CD14-positive monocyte (primary cell): ENCODE measurements at regions of chr17 and their contacts with region 1.

Region 1: DNA sequence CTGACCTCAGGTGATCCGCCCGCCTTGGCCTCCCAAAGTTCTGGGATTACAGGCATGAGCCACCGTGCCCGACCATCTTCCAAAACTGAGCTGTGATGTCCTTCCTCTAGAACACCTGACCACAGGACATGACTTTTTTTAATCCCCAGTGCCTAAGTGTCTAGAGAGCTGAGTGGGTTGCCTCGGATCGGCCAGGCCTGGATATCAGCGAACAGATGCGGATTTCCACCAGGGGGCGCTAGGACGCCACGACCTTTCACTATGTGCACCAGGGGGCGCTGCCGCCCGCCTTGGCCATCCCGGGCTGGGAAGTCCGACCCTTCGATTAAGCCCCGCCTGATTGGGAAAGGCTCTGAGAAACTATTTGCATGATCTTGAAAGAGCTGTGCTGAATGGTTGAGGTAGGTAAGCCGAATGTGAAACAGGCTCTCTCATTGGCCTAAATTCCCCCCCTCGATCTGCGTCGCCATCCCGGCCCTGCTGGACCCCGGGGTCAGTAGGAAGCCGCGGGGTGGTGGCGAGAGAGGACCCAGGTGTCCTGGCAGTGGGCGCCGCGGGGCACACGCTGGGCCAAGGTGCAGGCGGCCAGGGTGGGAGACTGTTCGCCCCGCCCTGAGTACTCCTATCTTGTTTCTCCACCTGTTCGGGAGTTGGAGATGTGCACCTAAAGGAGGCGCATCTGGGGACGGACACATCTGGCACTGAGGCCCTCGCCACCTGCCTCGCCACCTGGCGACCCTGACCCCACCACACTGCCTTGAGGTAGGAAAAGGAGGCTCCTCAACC is at the start of gene ACBD4:
- DNase-seq: peak; percentile 97 to 99 (median 98)
- H3K4me3 ChIP-seq: peak within 1 kb of the TSS; percentile 63 to 84 (median 82)
- H3K4me3 Mint-ChIP-seq: peak within 1 kb of the TSS; percentile 80 to 90
- H3K27ac ChIP-seq: peak within 1 kb of the TSS; percentile 11 to 75
- H3K27ac Mint-ChIP-seq: peak within 1 kb of the TSS; percentile 74 to 90 (median 79)
- H3K4me1 ChIP-seq: peaks cover 20 to 31% of the 10 kb centered on the region in 2 donors
- H3K4me1 Mint-ChIP-seq: peaks cover 26% of the 10 kb centered on the region
- H3K27me3 ChIP-seq: peaks cover 0 to 8% of the 10 kb centered on the region in 2 donors
- H3K27me3 Mint-ChIP-seq: peaks cover 7 to 14% (median 8%) of the 10 kb centered on the region in 3 donors
- CTCF ChIP-seq: peak; percentile 100
- polyA plus RNA-seq, gene ACBD4: 4.8 to 7.4 (median 6.2) TPM

Region 2: DNA sequence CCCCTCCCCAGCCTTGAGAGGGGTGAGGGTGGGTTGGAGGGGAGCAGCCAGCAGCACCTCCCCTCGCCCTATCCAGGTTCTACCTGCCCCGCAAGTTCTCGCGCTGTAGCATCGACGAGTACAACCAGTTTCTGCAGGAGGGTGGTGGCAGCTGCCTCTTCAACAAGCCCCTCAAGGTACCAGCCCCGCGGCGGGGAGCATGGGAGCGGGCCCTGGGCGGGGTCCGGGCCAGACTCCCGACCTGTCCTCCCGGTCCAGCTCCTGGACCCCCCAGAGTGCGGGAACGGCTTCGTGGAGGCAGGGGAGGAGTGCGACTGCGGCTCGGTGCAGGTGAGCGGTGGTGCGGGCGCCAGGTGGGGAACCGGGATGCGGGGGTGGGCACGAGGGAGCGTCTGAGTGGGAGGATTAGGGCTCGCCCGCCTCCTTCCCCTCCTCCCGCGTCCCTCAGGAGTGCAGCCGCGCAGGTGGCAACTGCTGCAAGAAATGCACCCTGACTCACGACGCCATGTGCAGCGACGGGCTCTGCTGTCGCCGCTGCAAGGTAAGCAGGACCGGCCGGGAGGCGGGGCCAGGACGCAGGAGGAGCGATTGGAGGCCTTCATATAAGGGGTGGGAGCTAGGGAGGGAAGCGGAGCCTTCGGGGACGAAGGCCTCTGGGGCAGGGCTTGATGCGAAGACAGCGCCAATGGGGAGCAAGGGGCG is 360.1 kb before region 1 on chr17:
- intact Hi-C with region 1: loop called (anchors 10 kb)
- DNase-seq: peak; percentile 92 to 97 (median 92)
- H3K4me3 ChIP-seq: peak overlapping the region; percentile 38 to 88 (median 50)
- H3K4me3 Mint-ChIP-seq: peak overlapping the region; percentile 79 to 90
- H3K27ac ChIP-seq: no peak overlapping the region
- H3K27ac Mint-ChIP-seq: peak overlapping the region in 1 of 7 donors; percentile 37
- H3K4me1 ChIP-seq: peaks cover 30 to 40% of the 10 kb centered on the region in 2 donors
- H3K4me1 Mint-ChIP-seq: peaks cover 36% of the 10 kb centered on the region
- H3K27me3 ChIP-seq: peaks cover 0 to 21% of the 10 kb centered on the region in 2 donors
- H3K27me3 Mint-ChIP-seq: peaks cover 20 to 46% (median 34%) of the 10 kb centered on the region in 3 donors
- CTCF ChIP-seq: peak; percentile 56

Region 3: DNA sequence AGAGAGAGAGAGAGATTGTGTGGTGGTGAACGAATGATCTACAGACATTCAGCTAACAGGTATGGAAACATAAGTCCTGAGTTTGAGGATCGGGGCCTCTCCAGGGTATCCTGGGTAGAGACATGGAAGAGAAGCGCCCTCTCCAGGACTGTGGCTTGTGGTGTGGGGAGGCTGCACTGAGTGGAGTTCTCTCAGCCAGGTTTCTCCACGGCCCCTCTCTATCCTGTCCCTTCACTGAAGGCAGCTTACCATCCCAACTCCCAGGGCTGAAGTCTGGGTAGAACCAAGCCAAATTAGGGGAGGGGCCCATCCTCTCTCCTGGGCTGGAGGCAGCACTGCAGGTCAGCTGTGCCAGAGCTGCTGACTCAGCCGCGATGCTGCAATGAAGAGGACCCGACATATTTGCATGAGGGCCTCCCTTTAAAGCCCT is 173.4 kb before region 1 on chr17:
- intact Hi-C with region 1: no loop called
- DNase-seq: no peak
- H3K4me3 ChIP-seq: no peak overlapping the region
- H3K4me3 Mint-ChIP-seq: peak overlapping the region in 1 of 2 donors; percentile 21
- H3K27ac ChIP-seq: no peak overlapping the region
- H3K27ac Mint-ChIP-seq: no peak overlapping the region
- H3K4me1 ChIP-seq: peaks cover 0 to 1% of the 10 kb centered on the region in 2 donors
- H3K4me1 Mint-ChIP-seq: peaks cover 10% of the 10 kb centered on the region
- H3K27me3 ChIP-seq: peaks cover 34 to 87% of the 10 kb centered on the region in 2 donors
- H3K27me3 Mint-ChIP-seq: peaks cover 72 to 96% (median 83%) of the 10 kb centered on the region in 3 donors
- CTCF ChIP-seq: no peak

Region 4: GRCh38 chr17:45073414-45074070 is 61.8 kb before region 1 on chr17:
- intact Hi-C with region 1: no loop called
- DNase-seq: no peak
- H3K4me3 ChIP-seq: no peak overlapping the region
- H3K4me3 Mint-ChIP-seq: no peak overlapping the region
- H3K27ac ChIP-seq: peak overlapping the region in 1 of 2 donors; percentile 65
- H3K27ac Mint-ChIP-seq: peak overlapping the region in 5 of 7 donors; percentile 33 to 77 (median 55)
- H3K4me1 ChIP-seq: peaks cover 41 to 48% of the 10 kb centered on the region in 2 donors
- H3K4me1 Mint-ChIP-seq: peaks cover 55% of the 10 kb centered on the region
- H3K27me3 ChIP-seq: no peaks in the 10 kb centered on the region
- H3K27me3 Mint-ChIP-seq: peaks cover 0 to 4% (median 0%) of the 10 kb centered on the region in 3 donors
- CTCF ChIP-seq: no peak

Region 5: DNA sequence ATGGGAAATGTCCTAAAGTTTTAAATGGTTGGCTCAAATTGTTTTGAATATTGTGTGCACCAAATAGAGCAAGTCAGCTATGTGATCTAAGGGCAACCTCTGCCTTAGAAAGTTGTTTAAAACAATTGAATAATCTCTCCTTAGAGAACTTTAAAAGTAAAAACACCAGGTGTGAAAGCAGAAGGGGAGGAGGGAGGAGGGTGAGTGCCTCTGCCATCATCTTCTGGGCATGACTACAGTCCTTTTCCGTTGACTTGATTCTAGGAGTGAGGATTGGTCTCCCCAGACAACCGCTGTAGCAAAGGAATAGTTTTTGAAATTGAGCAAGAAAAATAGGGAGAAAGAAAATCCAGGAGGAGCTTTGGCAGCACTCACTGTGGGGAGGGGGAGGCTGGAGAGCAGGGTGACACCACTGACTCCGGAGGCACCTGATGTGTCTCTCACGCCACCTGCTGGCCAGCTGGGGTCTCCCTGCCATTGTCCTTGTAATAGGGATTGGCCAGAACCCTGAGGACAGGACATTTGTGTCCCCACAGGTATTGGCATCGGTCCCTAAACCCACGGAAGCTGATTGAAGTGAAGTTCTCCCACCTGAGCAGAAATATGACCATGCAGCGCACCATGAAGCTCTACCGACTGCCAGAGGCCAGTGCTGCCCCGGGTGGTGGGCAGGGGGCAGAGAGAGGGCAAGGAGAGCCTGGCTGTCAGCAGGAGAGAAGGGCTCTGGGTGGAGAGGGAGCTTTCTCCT is 36.3 kb before region 1 on chr17:
- intact Hi-C with region 1: loop called (anchors 5 kb)
- DNase-seq: peak; percentile 51 to 69 (median 69)
- H3K4me3 ChIP-seq: no peak overlapping the region
- H3K4me3 Mint-ChIP-seq: no peak overlapping the region
- H3K27ac ChIP-seq: no peak overlapping the region
- H3K27ac Mint-ChIP-seq: peak overlapping the region in 4 of 7 donors; percentile 15 to 69 (median 58)
- H3K4me1 ChIP-seq: no peaks in the 10 kb centered on the region
- H3K4me1 Mint-ChIP-seq: no peaks in the 10 kb centered on the region
- H3K27me3 ChIP-seq: no peaks in the 10 kb centered on the region
- H3K27me3 Mint-ChIP-seq: peaks cover 0 to 2% (median 2%) of the 10 kb centered on the region in 3 donors
- CTCF ChIP-seq: peak; percentile 89

Region 6: DNA sequence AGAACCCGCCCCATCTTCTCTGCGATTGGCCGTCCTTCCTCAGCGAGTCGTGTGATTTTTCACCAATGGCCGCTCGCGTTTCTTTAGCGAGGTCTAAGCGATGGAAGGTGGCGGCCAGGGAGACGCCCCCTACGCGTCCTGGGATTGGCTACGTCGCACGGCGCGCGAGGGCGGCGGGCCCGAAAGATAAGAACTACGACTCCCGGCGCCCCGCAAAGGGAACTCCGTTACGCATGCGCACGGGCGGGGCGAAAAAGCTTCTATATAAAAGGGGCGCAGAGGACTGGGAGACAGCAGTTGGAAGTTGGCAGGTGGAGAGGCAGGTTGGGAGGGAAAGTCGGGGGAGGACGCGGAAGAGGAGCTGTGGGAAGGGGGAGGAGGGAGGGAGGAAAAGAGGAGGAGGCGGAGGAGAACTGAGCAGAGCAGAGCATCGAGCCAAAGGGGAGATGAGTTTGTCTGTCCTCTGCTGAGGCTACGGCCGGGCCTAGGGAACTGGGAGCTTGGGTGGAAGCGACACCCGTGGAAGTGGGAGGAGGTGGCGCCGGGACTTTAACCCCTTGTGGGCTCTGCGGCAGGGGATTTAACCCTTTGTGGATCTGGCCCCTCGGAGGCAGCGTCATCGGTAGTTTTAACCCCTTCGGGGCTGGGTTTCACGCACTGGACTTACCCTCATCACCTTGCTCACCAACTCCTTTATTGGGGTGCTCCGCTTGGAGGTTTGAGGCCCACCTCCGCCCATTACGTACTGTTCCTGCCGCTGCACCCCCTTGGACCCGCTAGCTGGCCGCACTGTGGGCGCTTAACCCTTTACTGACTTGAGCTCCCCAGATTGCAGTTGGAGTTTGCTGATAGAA is 13.0 kb after region 1 on chr17 and contains the start of gene HEXIM1:
- intact Hi-C with region 1: loop called in 1 of 2 experiments (anchors 2 kb)
- DNase-seq: peak; percentile 99 to 100 (median 100)
- H3K4me3 ChIP-seq: peak within 1 kb of the TSS; percentile 80 to 92 (median 83)
- H3K4me3 Mint-ChIP-seq: peak within 1 kb of the TSS; percentile 99 to 100
- H3K27ac ChIP-seq: peak within 1 kb of the TSS; percentile 89 to 99
- H3K27ac Mint-ChIP-seq: peak within 1 kb of the TSS; percentile 97 to 100 (median 99)
- H3K4me1 ChIP-seq: peaks cover 56 to 75% of the 10 kb centered on the region in 2 donors
- H3K4me1 Mint-ChIP-seq: peaks cover 53% of the 10 kb centered on the region
- H3K27me3 ChIP-seq: no peaks in the 10 kb centered on the region
- H3K27me3 Mint-ChIP-seq: peaks cover 0 to 2% (median 0%) of the 10 kb centered on the region in 3 donors
- CTCF ChIP-seq: no peak
- polyA plus RNA-seq, gene HEXIM1: 2.2 to 14.8 (median 2.5) TPM

Region 7: GRCh38 chr17:45197555-45198334 is 62.4 kb after region 1 on chr17:
- intact Hi-C with region 1: loop called (anchors 1 kb)
- DNase-seq: peak; percentile 86 to 89 (median 87)
- H3K4me3 ChIP-seq: no peak overlapping the region
- H3K4me3 Mint-ChIP-seq: peak overlapping the region in 1 of 2 donors; percentile 34
- H3K27ac ChIP-seq: no peak overlapping the region
- H3K27ac Mint-ChIP-seq: peak overlapping the region in 4 of 7 donors; percentile 40 to 76 (median 66)
- H3K4me1 ChIP-seq: peaks cover 42 to 51% of the 10 kb centered on the region in 2 donors
- H3K4me1 Mint-ChIP-seq: peaks cover 40% of the 10 kb centered on the region
- H3K27me3 ChIP-seq: no peaks in the 10 kb centered on the region
- H3K27me3 Mint-ChIP-seq: peaks cover 0 to 4% (median 2%) of the 10 kb centered on the region in 3 donors
- CTCF ChIP-seq: peak; percentile 99

Region 8: GRCh38 chr17:45385331-45385997 is 250.1 kb after region 1 on chr17:
- intact Hi-C with region 1: loop called in 1 of 2 experiments (anchors 10 kb)
- DNase-seq: peak; percentile 77 to 85 (median 83)
- H3K4me3 ChIP-seq: no peak overlapping the region
- H3K4me3 Mint-ChIP-seq: peak overlapping the region in 1 of 2 donors; percentile 35
- H3K27ac ChIP-seq: no peak overlapping the region
- H3K27ac Mint-ChIP-seq: peak overlapping the region in 1 of 7 donors; percentile 19
- H3K4me1 ChIP-seq: peaks cover 17 to 19% of the 10 kb centered on the region in 2 donors
- H3K4me1 Mint-ChIP-seq: peaks cover 28% of the 10 kb centered on the region
- H3K27me3 ChIP-seq: no peaks in the 10 kb centered on the region
- H3K27me3 Mint-ChIP-seq: peaks cover 3 to 22% (median 7%) of the 10 kb centered on the region in 3 donors
- CTCF ChIP-seq: peak; percentile 98